ENCODE measurements at regions of chr3 and their contacts with region 1.

Region 1: DNA sequence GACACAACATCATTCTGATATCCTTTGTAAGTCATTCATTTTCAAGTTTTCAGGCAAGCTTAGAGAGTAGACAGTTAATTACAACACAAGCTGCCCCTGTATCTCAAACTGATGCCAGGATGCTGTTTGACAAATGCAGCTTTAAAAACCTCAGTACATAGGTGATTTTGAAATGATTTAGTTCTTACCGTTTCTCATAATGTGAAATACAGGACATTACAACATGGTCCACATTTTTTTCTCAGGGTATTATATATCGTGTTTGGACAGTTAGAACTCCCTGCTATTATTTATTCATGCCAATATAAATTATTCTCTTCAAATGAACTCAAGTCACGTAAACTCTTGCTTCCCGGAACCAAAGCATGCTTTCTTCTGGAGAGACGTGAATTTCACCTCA is 1013.9 kb downstream of the EPHA3 start:
- DNase-seq: no peak
- H3K4me3 ChIP-seq: no peak overlapping the region
- H3K27ac ChIP-seq: no peak overlapping the region
- H3K4me1 ChIP-seq: no peaks in the 10 kb centered on the region
- CTCF ChIP-seq: no peak

Region 2: DNA sequence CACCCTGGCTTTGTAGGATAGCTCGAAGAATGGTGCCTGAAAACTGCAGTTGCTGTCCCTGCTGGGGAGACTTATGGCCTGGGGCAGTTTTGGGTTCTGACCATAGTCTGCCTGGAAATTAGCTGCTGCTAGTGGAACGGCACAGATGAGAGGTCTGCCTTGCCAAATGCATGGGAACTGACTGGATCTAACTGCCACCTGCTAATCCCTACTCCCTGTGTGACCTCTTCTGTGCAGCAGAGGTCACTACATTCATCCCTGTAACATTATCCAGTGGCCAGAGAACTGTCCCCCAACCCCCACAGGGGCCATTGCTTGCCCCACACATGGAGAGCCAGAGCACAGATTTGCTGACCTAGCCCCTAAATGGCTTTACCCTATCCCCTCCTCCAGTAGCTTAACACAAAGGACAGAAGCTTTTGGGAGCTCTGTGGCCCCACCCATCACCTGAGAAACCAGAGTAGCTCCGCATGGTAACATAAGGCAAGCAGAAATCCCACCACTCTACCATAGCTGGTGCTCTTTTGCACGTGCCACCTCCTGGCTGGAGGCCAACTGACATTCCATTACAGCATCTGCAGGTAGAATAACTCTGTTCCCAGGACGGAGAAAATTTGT is 173.9 kb before region 1 on chr3:
- CTCF ChIA-PET with region 1: no interaction called
- POLR2A ChIA-PET with region 1: no interaction called
- intact Hi-C with region 1: no loop called
- DNase-seq: no peak
- H3K4me3 ChIP-seq: no peak overlapping the region
- H3K27ac ChIP-seq: no peak overlapping the region
- H3K4me1 ChIP-seq: no peaks in the 10 kb centered on the region
- CTCF ChIP-seq: no peak

Region 3: DNA sequence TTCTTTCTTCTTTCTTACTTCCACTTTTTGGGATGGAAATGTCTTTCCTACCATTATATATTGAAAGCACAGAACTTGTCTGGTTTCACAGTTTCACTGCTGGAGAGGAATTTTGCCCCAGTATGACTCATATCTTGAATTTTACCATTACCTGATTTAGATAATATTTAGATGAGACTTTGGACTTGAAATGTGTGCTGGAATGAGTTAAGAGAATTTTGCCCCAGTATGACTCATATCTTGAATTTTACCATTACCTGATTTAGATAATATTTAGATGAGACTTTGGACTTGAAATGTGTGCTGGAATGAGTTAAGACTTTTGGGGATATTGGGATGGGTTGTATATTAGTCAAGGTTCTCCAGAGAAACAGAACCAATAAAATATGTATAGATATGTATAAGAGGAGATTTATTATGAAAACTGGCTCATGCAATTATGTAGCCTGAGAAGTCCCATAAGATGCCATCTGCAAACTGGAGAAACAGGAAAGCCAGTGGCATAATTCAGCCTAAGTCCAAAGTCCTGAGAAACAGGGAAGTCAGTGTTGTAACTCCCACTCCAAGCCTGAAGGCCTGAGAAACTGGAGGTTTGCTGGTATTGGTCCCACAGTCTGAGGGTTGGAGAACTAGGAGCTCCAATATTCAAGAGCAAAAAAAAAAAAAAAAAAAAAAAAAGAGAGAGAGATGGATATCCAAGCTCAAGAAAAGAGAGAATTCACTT is 15.3 kb after region 1 on chr3:
- CTCF ChIA-PET with region 1: no interaction called
- POLR2A ChIA-PET with region 1: interaction called, 3 read pairs
- intact Hi-C with region 1: loop called (anchors 1 kb)
- DNase-seq: no peak
- H3K4me3 ChIP-seq: no peak overlapping the region
- H3K27ac ChIP-seq: no peak overlapping the region
- H3K4me1 ChIP-seq: no peaks in the 10 kb centered on the region
- CTCF ChIP-seq: no peak

Measured in OCI-LY7 (cell line).